ENCODE measurements at regions of chr1 and their contacts with region 1.

Region 1: GRCh38 chr1:68145418-68146126 is 86.8 kb downstream of the WLS start:
- DNase-seq: peak; percentile 52 to 57
- H3K4me3 ChIP-seq: no peak overlapping the region
- H3K4me3 Mint-ChIP-seq: peak overlapping the region; percentile 27
- H3K27ac Mint-ChIP-seq: peak overlapping the region; percentile 67
- H3K4me1 ChIP-seq: peaks cover 18% of the 10 kb centered on the region
- H3K4me1 Mint-ChIP-seq: peaks cover 11% of the 10 kb centered on the region
- H3K27me3 ChIP-seq: no peaks in the 10 kb centered on the region
- H3K27me3 Mint-ChIP-seq: no peaks in the 10 kb centered on the region
- CTCF ChIP-seq: no peak

Region 2: DNA sequence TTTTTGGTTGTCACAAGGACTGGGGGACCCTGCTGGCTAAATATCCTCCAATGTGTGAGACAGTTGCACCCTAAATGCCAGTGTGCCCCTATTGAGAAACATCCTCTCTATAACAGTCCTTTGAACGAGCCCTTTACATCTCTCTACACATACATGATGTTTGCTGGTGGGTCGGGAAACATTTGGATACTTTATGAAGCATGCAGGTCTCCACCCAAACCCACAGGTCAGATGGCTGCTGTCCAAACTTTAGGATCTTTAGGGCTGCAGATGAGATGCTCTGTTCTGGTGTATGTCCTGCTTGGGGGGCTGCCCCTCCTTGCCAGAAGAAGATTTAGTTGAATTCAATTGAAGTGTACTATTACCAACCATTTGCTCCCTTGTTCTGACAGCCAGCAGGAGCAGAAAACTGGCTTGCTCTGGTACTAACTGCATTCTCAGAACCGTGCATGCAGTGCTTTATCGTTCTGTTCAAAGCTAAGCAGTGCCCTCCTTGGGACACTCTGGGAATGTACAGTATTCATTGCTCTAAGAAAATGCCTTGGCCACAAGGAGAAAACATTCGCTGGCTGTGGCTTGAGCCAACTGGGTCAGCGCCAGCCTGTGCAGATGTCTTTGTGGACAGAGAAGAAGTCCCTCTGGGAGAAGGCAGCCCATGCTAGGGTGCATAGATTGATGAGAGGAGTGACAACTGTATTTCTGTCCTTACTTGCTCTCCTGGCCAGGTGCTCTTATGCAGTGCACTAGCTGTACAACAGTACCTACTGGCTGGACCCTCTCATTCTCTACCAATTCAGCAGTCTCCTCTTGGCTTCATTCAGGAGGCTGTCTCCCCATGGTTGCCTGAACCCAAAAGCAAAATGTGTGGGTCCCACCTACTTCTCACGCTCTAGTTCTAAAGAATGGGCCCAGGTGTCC is 33.8 kb before region 1 on chr1:
- CTCF ChIA-PET with region 1: no interaction called
- POLR2A ChIA-PET with region 1: no interaction called
- intact Hi-C with region 1: no loop called
- DNase-seq: peak in 1 of 2 experiments; percentile 47
- H3K4me3 ChIP-seq: no peak overlapping the region
- H3K4me3 Mint-ChIP-seq: no peak overlapping the region
- H3K27ac Mint-ChIP-seq: no peak overlapping the region
- H3K4me1 ChIP-seq: no peaks in the 10 kb centered on the region
- H3K4me1 Mint-ChIP-seq: no peaks in the 10 kb centered on the region
- H3K27me3 ChIP-seq: no peaks in the 10 kb centered on the region
- H3K27me3 Mint-ChIP-seq: no peaks in the 10 kb centered on the region
- CTCF ChIP-seq: peak; percentile 51

Region 3: DNA sequence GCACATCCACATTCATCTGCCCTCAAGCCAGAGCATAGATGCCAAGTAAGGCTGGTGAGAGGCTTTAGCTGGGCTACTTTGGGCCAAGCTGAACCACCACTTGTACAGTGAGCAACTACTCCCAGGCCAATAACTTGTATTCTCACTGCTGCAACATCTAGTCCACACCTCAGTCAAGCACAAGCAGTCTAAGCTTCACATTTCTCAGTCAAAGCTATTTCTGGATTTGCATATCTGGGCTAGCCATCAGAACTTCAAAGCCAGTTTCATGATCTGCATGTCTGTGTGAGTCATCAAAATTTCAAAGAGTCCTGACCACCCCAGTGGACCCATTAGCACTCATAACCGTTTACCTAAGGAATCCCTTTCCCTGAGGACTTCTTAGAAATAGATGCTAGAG is 17.4 kb before region 1 on chr1:
- CTCF ChIA-PET with region 1: no interaction called
- POLR2A ChIA-PET with region 1: no interaction called
- intact Hi-C with region 1: loop called (anchors 2 kb)
- DNase-seq: peak in 1 of 2 experiments; percentile 48
- H3K4me3 ChIP-seq: no peak overlapping the region
- H3K4me3 Mint-ChIP-seq: no peak overlapping the region
- H3K27ac Mint-ChIP-seq: no peak overlapping the region
- H3K4me1 ChIP-seq: peaks cover 10% of the 10 kb centered on the region
- H3K4me1 Mint-ChIP-seq: peaks cover 14% of the 10 kb centered on the region
- H3K27me3 ChIP-seq: no peaks in the 10 kb centered on the region
- H3K27me3 Mint-ChIP-seq: no peaks in the 10 kb centered on the region
- CTCF ChIP-seq: no peak

Measured in Caco-2 (cell line).